Breast epithelium (tissue), 4 donors: ENCODE measurements at regions of chr16 and their contacts with region 1.

Region 1: DNA sequence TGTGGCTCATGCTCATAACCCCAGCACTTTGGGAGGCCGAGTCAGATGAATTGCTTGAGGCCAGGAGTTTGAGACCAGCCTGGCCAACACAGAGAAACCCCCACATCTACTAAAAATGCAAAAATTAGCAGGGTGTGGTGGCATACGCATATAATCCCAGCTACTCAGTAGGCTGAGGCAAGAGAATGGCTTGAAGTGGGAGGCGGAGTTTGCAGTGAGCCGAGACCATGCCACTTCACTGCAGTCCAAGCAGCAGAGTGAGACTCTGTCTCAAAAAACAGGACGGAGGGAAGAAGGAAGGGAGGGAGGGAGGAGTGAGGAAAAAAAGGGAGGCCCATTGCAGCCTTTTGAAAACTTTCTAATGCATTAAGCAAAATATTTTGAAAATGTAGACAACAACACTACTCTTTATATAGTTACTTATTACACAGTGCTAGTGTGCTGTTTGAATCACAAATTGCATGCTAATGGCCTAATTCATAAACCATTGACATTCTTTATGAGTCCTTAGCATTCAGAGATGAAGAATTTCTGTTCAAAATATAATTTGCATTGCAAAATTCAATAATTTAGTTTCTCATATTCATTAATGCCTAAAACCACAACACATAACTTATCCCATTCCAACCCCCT is 59.4 kb downstream of the TMEM114 start:
- DNase-seq: no peak
- H3K4me3 ChIP-seq: no peak overlapping the region
- H3K27ac ChIP-seq: no peak overlapping the region
- H3K4me1 ChIP-seq: no peaks in the 10 kb centered on the region
- H3K27me3 ChIP-seq: peaks cover 0 to 16% of the 10 kb centered on the region in 2 donors
- CTCF ChIP-seq: no peak
- POLR2A ChIP-seq: no peak

Region 2: DNA sequence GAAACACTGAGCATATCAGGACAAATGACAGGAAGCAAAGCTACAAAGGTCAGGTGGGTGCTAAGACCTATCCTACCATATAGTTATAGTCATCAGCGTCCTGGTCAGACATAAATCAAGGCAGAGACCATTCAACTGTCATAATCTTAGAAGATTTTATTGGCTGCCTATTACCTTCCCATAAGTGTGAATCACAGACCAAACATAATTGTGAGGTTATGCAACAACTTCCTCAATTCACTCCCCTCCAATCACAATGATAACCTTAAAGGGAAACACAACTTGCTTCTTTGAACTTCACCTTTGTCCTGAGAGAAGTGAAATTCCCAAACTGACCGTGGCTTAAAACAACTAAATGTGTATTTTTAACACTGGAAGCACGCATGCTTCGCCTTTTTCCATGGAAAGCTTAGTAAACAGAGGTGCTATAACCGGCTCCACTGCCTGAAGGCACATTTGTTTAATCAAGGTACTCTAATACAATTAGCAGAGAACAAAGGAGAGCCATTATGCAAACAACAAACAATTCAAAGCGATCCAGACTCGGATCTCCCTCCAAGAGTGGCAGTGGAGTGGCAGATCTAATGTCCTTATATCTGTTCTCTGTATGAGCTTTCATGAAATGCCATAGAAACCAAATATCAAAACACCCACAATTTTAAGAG is 25.4 kb before region 1 on chr16:
- intact Hi-C with region 1: loop called (anchors 1 kb)
- DNase-seq: no peak
- H3K4me3 ChIP-seq: no peak overlapping the region
- H3K27ac ChIP-seq: no peak overlapping the region
- H3K4me1 ChIP-seq: no peaks in the 10 kb centered on the region
- H3K27me3 ChIP-seq: peaks cover 0 to 6% of the 10 kb centered on the region in 2 donors
- CTCF ChIP-seq: no peak
- POLR2A ChIP-seq: no peak